ENCODE measurements at regions of chr20 and their contacts with region 1.

Region 1: GRCh38 chr20:62386383-62387218 is at the start of gene RPS21:
- DNase-seq: peak; percentile 97
- ATAC-seq: peak; percentile 91
- H3K4me3 Mint-ChIP-seq: peak within 1 kb of the TSS; percentile 93
- H3K27ac Mint-ChIP-seq: peak within 1 kb of the TSS; percentile 94
- H3K4me1 Mint-ChIP-seq: peaks cover 42% of the 10 kb centered on the region
- H3K27me3 Mint-ChIP-seq: no peaks in the 10 kb centered on the region
- total RNA-seq, gene RPS21: 1,051 to 2,439 TPM

Region 2: DNA sequence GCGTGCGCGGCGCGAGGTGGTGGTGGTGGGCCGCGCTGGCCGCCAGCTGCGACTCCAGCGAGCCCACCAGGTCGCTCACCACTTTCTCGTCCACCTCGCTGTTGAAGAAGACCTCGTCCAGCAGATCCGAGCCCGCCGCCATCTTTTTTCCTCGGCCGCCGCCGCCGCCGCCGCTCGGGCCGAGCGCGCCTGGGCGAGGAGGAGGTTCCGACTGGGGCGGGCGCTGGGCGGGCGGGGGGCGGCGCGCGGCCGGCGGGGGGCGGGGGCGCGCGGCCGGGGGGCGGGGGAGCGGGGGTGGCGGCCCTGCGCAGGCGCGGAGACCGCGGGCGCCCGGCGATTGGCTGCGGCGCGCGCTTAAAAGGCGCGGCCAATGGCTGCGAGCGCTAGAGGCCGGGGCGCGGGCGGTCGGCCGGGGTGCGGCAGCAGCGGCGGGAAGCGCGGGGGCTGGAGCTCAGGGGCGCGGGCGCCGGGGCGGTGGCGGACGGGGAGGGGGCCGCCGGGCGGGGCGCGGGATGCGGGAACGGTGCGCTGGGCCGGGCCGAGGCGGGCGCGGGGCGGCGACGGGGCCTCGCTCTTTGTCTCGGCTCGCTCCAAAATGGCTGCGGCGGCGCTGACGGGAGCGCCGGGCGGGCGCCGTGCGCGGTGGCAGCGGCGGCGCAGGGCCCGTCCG is 320.8 kb before region 1 on chr20 and contains the start of gene TAF4:
- CTCF ChIA-PET with region 1: no interaction called
- POLR2A ChIA-PET with region 1: no interaction called
- intact Hi-C with region 1: loop called in 1 of 2 experiments (anchors 2 kb)
- DNase-seq: peak; percentile 87
- ATAC-seq: peak; percentile 79
- H3K4me3 Mint-ChIP-seq: peak within 1 kb of the TSS; percentile 75
- H3K27ac Mint-ChIP-seq: peak within 1 kb of the TSS; percentile 78
- H3K4me1 Mint-ChIP-seq: peaks cover 53% of the 10 kb centered on the region
- H3K27me3 Mint-ChIP-seq: no peaks in the 10 kb centered on the region
- total RNA-seq, gene TAF4: 15.4 to 27.1 TPM

Region 3: GRCh38 chr20:62182613-62183425 is 203.8 kb before region 1 on chr20 and contains the start of gene MTG2:
- CTCF ChIA-PET with region 1: interaction called, 3 read pairs
- POLR2A ChIA-PET with region 1: no interaction called
- intact Hi-C with region 1: loop called in 1 of 2 experiments (anchors 1 kb)
- DNase-seq: peak; percentile 97
- ATAC-seq: peak; percentile 99
- H3K4me3 Mint-ChIP-seq: peak within 1 kb of the TSS; percentile 88
- H3K27ac Mint-ChIP-seq: peak within 1 kb of the TSS; percentile 87
- H3K4me1 Mint-ChIP-seq: peaks cover 39% of the 10 kb centered on the region
- H3K27me3 Mint-ChIP-seq: no peaks in the 10 kb centered on the region
- total RNA-seq, gene MTG2: 38.0 to 44.9 TPM

Region 4: DNA sequence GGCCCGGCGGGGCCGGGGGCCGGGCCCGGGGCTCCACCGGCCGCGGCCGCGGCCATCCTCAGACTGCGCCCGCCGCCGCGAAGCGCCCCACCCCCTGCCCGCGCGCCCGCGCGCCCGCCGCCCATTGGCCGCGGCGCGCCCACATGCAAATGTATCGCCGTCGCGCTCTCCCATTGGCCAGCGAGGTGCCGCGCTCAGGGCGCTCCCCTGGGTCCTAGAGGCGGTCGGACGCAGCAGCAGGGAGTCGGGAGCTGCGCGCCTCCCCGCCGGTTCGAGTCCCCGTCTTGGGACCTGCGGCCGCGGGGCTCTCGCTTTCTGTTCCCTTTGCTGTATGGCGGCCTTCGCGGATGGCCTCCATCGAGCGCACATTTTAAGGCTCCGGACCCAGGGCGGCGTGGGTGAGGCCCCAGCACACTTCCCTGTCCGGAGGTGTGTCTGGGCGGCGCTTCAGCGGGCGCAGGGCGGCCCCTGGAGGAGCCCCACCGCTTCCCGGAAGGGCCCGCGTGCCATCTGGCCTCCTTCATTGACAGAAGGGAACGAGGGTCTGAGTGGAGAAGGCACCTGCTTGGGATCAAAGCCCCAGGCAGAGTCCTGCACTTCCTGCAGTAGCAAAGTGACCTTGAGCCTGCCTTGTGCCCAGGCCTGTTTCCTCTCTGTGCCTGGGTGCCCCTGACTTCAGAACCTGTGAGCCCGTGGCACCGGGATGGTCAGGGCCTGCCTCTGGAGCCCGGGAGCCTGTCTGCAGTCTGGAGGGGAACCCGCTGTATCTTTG is 20.8 kb after region 1 on chr20 and contains the start of gene CABLES2:
- CTCF ChIA-PET with region 1: interaction called, 8 read pairs
- POLR2A ChIA-PET with region 1: interaction called, 3 read pairs
- intact Hi-C with region 1: loop called (anchors 1 to 2 kb)
- DNase-seq: peak; percentile 96
- ATAC-seq: peak; percentile 93
- H3K4me3 Mint-ChIP-seq: peak within 1 kb of the TSS; percentile 72
- H3K27ac Mint-ChIP-seq: peak within 1 kb of the TSS; percentile 82
- H3K4me1 Mint-ChIP-seq: peaks cover 23% of the 10 kb centered on the region
- H3K27me3 Mint-ChIP-seq: peaks cover 2% of the 10 kb centered on the region
- total RNA-seq, gene CABLES2: 6.4 to 7.6 TPM

Region 5: DNA sequence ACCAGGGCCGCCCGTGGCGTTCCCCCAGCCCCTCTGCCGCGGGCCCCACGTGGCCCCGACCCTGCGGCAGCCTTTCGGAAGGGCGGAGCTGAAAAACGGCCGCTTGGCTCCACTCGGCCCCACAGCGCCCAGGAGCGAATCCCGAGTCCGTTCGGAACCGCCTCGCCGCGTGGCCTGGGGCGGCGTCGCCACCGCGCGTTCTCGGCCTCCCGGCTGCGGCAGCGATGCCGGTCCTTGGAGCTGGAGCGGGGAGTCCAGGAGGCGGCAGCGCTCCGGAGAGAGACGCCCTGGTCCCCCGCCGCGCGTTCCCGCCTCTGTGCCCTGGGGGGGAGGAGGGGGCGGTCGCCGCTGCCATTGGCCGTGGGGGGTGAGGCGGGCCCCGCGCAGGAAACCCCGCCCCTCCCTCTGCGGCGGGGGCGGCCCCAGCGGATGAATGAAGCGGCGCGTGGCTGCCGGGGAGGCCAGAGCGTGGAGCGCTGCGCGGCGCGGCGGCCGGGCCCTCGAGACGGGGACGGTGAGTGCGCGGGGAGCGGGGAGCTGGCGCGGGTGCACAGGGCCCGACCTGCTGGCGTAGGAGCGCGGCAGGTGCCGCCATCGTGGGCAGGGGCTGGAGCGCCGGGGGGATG is 255.6 kb after region 1 on chr20 and contains the start of gene SLCO4A1:
- CTCF ChIA-PET with region 1: no interaction called
- POLR2A ChIA-PET with region 1: no interaction called
- intact Hi-C with region 1: loop called in 1 of 2 experiments (anchors 2 kb)
- DNase-seq: peak; percentile 93
- ATAC-seq: peak; percentile 94
- H3K4me3 Mint-ChIP-seq: peak within 1 kb of the TSS; percentile 79
- H3K27ac Mint-ChIP-seq: peak within 1 kb of the TSS; percentile 69
- H3K4me1 Mint-ChIP-seq: peaks cover 11% of the 10 kb centered on the region
- H3K27me3 Mint-ChIP-seq: peaks cover 4% of the 10 kb centered on the region
- total RNA-seq, gene SLCO4A1: 40.5 to 43.4 TPM